ENCODE measurements at regions of chr6 and their contacts with region 1.

Region 1: DNA sequence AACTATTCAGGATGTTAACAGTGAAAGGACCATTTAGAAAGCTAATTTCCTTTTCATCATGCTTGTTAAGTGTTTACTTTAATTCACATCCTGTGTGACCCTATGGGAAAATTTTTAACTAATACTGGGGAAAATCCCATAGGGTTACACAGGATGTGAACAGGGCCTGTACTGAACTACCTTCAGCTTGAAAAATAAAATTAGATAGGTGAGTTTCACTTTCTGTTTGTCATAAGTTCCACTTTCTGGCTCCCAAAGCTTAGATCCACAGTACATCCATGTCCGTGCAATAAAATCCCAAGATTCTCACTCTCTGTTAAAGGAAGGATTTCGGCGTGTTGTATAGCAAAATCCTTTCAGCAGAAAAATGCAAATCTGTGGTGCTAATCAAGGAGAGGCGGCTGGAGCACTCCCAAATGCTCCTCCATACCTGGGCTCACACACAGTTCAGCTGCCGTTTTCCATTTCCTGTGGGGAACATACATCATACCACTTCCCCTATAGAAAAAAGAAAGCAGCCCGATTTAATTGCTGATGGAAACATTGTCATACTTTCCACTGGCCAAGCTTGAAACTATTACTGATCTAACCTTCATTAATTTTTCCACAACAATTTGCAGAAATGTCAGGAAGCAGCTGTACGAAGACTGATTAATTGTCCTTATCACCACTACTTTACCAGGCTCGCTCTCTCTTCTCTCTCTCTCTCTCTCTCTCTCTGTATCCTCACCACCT is 125.2 kb downstream of the HIVEP2 start:
- DNase-seq: peak; percentile 70
- ATAC-seq: peak; percentile 62
- H3K4me3 Mint-ChIP-seq: peak overlapping the region; percentile 78
- H3K27ac Mint-ChIP-seq: peak overlapping the region; percentile 96
- H3K4me1 Mint-ChIP-seq: peaks cover 83% of the 10 kb centered on the region
- H3K27me3 Mint-ChIP-seq: no peaks in the 10 kb centered on the region

Region 2: DNA sequence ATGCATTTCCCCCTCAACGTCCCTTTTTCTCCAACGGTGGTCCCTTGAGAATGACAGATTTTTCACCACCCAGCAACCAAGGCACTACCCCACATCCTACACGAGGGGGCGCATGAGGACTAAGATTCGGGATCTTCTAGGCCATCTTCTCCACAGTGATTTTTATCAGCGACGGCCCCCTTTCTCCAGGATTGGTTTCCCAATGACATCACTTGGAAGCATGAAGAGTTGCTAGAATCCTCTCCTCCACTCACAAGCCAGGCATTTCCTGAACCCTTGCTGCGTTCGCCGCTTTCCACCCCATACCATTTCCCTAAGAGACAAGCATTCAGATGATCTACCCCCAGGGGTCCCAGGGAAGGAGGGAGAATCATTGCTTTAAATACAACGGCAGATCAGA is 126.8 kb before region 1 on chr6:
- CTCF ChIA-PET with region 1: interaction called, 6 read pairs
- POLR2A ChIA-PET with region 1: no interaction called
- intact Hi-C with region 1: loop called in 1 of 2 experiments (anchors 5 kb)
- DNase-seq: peak; percentile 79
- ATAC-seq: peak; percentile 75
- H3K4me3 Mint-ChIP-seq: no peak overlapping the region
- H3K27ac Mint-ChIP-seq: peak overlapping the region; percentile 62
- H3K4me1 Mint-ChIP-seq: peaks cover 27% of the 10 kb centered on the region
- H3K27me3 Mint-ChIP-seq: no peaks in the 10 kb centered on the region

Region 3: DNA sequence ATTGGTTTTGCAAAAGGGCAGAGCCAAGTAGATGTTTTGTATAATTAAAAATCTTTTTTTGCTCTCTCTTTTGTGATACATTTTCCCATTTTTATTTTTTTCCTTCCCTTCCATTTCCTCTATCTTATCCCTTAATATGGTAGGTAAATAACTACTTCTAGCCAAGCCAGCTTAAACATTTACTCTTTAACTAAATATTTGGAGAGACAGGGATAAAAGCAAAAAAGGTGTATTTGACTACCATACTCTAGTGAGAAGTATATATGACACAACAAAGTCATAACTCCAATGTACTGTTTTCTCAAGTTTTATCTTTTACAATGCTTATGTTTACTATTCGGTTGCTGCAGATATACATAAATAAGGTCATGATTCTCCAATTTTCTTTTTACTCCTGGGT is 29.5 kb before region 1 on chr6:
- CTCF ChIA-PET with region 1: interaction called, 10 read pairs
- POLR2A ChIA-PET with region 1: no interaction called
- intact Hi-C with region 1: no loop called
- DNase-seq: no peak
- ATAC-seq: no peak
- H3K4me3 Mint-ChIP-seq: no peak overlapping the region
- H3K27ac Mint-ChIP-seq: peak overlapping the region; percentile 64
- H3K4me1 Mint-ChIP-seq: peaks cover 74% of the 10 kb centered on the region
- H3K27me3 Mint-ChIP-seq: no peaks in the 10 kb centered on the region

Region 4: DNA sequence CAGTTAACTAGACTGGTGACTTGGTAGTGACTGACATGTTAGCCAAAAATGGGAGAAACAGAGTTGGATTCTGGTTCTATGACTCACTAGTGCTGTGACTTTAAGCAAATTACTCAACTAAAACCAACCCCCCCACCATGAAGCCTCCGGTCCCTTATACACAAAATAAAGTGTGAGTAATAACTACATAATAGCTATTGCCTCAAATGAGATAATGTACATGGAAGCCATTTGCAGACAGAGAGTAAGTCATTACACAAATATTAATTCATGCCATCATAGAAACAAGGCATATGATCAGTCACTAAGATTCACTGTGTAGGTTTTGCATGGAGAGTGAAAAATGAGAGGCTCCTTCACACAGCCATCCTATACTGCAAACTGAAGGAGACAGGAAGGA is 13.3 kb after region 1 on chr6:
- CTCF ChIA-PET with region 1: interaction called, 37 read pairs
- POLR2A ChIA-PET with region 1: interaction called, 6 read pairs
- intact Hi-C with region 1: loop called in 1 of 2 experiments (anchors 1 kb)
- DNase-seq: peak; percentile 65
- ATAC-seq: peak; percentile 89
- H3K4me3 Mint-ChIP-seq: peak overlapping the region; percentile 5
- H3K27ac Mint-ChIP-seq: peak overlapping the region; percentile 81
- H3K4me1 Mint-ChIP-seq: peaks cover 80% of the 10 kb centered on the region
- H3K27me3 Mint-ChIP-seq: no peaks in the 10 kb centered on the region

Region 5: DNA sequence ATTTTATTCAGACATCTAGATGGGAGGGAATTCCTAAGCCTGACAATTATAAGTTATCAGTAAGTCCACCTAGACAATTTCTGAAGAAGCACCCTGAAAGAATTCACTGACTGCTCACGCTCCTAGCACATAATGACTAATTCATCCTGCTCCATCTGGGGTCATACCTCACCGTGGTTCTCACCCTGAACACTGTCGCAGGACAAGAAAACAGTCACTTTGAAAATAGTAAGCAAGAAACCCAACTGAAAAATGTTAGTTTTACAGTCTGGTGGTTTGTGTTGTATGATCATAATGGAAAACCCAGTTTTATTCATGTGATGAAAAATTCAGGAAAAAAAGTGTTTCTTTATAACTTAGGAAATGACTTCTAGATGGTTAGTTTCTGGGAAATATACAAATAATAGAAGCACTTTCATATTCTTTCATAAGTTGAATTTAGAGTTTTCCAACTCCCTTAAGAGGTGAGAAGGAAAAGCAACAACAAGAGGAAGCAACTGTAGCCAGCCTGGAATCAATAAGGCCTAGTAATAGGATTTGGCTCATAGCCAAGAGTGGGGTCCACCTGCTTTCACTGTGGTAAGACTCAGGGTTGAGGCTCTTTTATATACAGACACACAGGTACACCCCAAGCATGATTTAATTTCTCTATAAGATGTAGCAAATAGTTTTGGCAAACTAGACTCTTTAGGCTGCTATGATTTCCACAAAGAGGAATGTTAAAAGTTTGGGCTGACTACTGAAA is 31.1 kb after region 1 on chr6:
- CTCF ChIA-PET with region 1: interaction called, 5 read pairs
- POLR2A ChIA-PET with region 1: interaction called, 7 read pairs
- intact Hi-C with region 1: loop called (anchors 2 kb)
- DNase-seq: peak; percentile 66
- ATAC-seq: peak; percentile 67
- H3K4me3 Mint-ChIP-seq: peak overlapping the region; percentile 37
- H3K27ac Mint-ChIP-seq: peak overlapping the region; percentile 86
- H3K4me1 Mint-ChIP-seq: peaks cover 95% of the 10 kb centered on the region
- H3K27me3 Mint-ChIP-seq: no peaks in the 10 kb centered on the region

Region 6: DNA sequence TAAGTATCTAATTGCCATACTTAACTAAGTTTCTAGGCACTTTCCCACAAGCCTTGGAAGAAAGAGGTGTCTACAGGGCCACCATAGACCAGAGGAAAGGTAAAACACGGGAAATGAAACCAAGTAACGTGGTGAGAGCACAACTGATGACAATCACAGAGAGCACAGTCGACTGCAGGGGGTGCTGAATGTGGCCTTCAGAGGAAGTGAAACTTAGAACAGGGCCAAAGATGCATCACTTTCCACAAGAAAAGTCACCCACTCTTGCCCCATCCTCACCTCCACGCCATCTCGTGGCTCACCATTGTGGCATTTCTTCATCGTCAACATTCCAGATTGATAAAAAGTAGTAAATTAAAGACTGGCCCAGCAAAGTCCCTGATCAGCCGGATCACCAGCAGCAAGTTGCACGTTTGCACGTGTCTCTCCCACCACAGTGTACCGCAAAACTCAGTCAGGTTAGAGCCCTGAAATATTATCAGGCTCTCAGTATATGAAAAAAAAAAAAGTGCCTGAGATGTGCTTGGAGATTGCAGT is 93.8 kb after region 1 on chr6:
- CTCF ChIA-PET with region 1: no interaction called
- POLR2A ChIA-PET with region 1: no interaction called
- intact Hi-C with region 1: loop called (anchors 1 kb)
- DNase-seq: peak; percentile 82
- ATAC-seq: peak; percentile 88
- H3K4me3 Mint-ChIP-seq: peak overlapping the region; percentile 65
- H3K27ac Mint-ChIP-seq: peak overlapping the region; percentile 97
- H3K4me1 Mint-ChIP-seq: peaks cover 86% of the 10 kb centered on the region
- H3K27me3 Mint-ChIP-seq: no peaks in the 10 kb centered on the region